ENCODE measurements at regions of chr19 and their contacts with region 1.

Region 1: GRCh38 chr19:17097593-17098126 is 22.1 kb downstream of the MYO9B start:
- DNase-seq: no peak
- ATAC-seq: no peak
- H3K4me3 Mint-ChIP-seq: no peak overlapping the region
- H3K27ac Mint-ChIP-seq: no peak overlapping the region
- H3K4me1 Mint-ChIP-seq: peaks cover 10% of the 10 kb centered on the region
- H3K27me3 Mint-ChIP-seq: no peaks in the 10 kb centered on the region

Region 2: DNA sequence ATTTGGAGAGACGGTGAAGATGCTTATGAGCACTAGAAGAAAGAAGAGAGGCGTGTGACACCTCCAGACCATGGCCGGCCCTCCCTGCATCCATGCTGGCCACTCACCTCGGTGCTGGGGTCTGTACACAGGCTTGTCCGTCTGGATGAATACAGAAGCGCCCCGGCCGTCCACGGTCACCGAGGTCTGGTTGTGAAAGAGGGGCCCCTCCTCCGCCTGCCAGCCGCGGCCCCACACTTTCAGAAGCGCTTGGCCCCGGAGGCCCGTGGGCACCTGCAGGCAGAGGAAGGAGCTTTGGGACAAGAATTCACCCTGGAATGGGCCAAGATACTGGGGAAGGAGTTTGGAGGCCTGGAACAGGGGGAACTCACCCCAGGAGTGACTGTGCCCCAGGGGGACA is 86.2 kb before region 1 on chr19:
- CTCF ChIA-PET with region 1: no interaction called
- POLR2A ChIA-PET with region 1: no interaction called
- intact Hi-C with region 1: no loop called
- DNase-seq: no peak
- ATAC-seq: no peak
- H3K4me3 Mint-ChIP-seq: no peak overlapping the region
- H3K27ac Mint-ChIP-seq: no peak overlapping the region
- H3K4me1 Mint-ChIP-seq: peaks cover 2% of the 10 kb centered on the region
- H3K27me3 Mint-ChIP-seq: peaks cover 8% of the 10 kb centered on the region

Region 3: DNA sequence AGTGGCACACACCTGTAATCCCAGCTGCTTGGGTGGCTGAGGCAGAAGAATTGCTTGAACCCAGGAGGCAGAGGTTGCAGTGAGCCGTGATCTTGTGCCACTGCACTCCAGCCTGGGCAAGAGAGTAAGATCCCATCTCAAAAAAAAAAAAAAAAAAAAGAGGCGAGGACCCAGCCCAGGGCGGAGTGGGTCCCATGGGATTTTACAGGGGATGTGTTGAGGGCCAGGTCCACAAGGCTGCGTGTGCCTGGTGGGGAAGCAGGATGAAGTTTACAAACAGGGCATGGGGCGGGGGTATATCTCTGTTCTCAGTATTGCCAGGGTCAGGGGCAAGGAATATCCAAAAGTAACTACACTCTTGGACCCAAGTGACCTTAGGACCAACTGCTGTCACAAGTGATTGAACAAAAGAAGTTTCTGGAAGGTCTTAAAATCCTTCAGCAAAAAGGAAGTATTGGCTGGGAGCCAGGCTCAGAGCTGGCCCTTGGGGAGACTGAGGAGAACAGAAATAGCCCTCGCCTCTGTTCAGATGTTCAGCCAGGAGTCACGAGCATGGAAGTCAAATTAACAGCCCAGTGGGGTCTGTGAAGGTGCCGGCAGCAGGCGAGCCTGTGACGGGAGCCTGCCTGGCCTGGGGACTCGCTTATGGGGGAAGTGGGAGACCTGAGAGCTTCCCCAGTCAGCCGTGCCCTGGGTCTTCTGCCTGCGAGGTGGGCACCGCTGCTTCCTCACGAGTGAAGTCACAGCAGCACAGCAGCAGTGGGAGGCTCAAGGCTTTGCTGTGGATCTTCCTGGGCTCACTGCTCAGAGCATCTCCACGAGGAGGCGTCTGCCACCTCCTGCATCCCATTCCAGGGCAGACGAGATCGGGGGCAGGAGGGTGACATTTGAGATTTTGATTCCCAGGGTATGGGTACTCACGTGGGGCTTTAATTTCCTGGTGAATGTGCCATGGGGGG is 15.7 kb before region 1 on chr19:
- CTCF ChIA-PET with region 1: interaction called, 3 read pairs
- POLR2A ChIA-PET with region 1: no interaction called
- intact Hi-C with region 1: loop called in 1 of 2 experiments (anchors 2 kb)
- DNase-seq: no peak
- ATAC-seq: no peak
- H3K4me3 Mint-ChIP-seq: no peak overlapping the region
- H3K27ac Mint-ChIP-seq: peak overlapping the region; percentile 60
- H3K4me1 Mint-ChIP-seq: peaks cover 59% of the 10 kb centered on the region
- H3K27me3 Mint-ChIP-seq: no peaks in the 10 kb centered on the region

Region 4: GRCh38 chr19:17466487-17466850 is 368.8 kb after region 1 on chr19:
- CTCF ChIA-PET with region 1: no interaction called
- POLR2A ChIA-PET with region 1: no interaction called
- intact Hi-C with region 1: no loop called
- DNase-seq: no peak
- ATAC-seq: no peak
- H3K4me3 Mint-ChIP-seq: no peak overlapping the region
- H3K27ac Mint-ChIP-seq: no peak overlapping the region
- H3K4me1 Mint-ChIP-seq: peaks cover 18% of the 10 kb centered on the region
- H3K27me3 Mint-ChIP-seq: no peaks in the 10 kb centered on the region